ENCODE measurements at regions of chr7 and their contacts with region 1.

Region 1: GRCh38 chr7:22559829-22560489 is 60.0 kb upstream of the STEAP1B start:
- DNase-seq: peak; percentile 45 to 82
- ATAC-seq: peak; percentile 64 to 74 (median 70)
- H3K4me3 ChIP-seq: no peak overlapping the region
- H3K27ac ChIP-seq: peak overlapping the region in 6 of 10 donors; percentile 69 to 93 (median 86)
- H3K4me1 ChIP-seq: peaks cover 8 to 52% (median 49%) of the 10 kb centered on the region in 9 donors
- H3K27me3 ChIP-seq: peaks cover 0 to 12% (median 0%) of the 10 kb centered on the region in 7 donors
- CTCF ChIP-seq: peak; percentile 82 to 96 (median 89)

Region 2: DNA sequence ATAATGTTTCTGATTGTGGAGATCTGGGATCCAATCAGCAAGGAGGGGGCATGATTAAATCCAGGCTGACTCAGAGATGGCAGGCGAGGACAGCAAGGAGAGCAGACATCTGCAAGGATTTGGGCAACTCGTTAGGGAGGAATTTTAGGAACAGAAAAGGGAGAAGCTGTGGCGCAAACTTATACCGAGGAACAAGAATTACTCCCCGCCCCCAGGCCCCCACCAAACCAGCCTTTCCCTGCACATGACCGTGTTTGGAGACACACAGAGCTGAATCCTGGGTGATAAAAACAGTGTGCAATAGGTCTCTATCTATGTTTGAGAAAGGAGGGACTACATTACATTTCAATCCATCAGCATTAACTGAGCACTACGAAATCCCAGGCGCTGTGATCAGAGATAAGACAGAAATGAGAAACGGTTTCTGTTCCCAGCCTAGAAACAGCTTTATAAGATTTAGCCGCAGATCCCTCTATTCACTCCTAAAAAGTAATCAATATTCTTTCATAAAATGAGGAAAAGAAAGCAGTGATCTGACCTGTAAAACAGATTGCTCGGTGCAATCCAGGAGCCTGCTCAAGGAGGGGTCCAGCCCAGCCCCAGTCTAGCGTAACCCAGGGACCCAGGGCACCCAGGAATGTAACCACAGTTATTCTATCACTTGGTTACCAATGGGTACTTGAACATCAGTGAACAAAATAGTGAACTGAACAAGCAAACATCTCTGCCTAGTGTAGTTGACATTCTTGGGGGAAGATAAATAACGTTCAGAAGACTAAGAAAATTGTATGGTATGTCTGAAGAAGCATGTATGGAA is 165.8 kb before region 1 on chr7:
- intact Hi-C with region 1: no loop called
- DNase-seq: no peak
- ATAC-seq: no peak
- H3K4me3 ChIP-seq: no peak overlapping the region
- H3K27ac ChIP-seq: no peak overlapping the region
- H3K4me1 ChIP-seq: peaks cover 0 to 5% (median 0%) of the 10 kb centered on the region in 9 donors
- H3K27me3 ChIP-seq: peaks cover 0 to 7% (median 0%) of the 10 kb centered on the region in 7 donors
- CTCF ChIP-seq: no peak

Region 3: DNA sequence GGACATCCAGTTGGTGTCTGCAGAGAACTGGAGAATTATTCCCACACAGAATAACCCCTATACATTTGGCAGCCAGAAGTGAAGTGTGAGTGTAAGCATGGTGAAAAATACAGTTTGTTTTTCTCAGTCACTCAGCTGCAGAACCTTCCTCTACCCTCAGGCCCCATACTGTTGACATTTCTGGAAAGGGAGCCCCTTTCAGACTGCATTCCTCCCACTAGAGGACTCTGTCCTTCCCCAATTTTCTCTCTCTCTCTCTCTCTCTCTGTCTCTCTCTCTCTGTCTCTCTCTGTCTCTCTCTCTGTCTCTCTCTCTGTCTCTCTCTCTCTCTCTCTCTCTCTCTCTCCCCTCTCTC is 26.8 kb after region 1 on chr7:
- intact Hi-C with region 1: loop called in 3 of 10 experiments (anchors 2 kb)
- DNase-seq: no peak
- ATAC-seq: no peak
- H3K4me3 ChIP-seq: no peak overlapping the region
- H3K27ac ChIP-seq: peak overlapping the region in 4 of 10 donors; percentile 16 to 93 (median 36)
- H3K4me1 ChIP-seq: peaks cover 21 to 82% (median 70%) of the 10 kb centered on the region in 9 donors
- H3K27me3 ChIP-seq: no peaks in the 10 kb centered on the region
- CTCF ChIP-seq: peak in 8 of 9 donors; percentile 13 to 50 (median 38)

Region 4: DNA sequence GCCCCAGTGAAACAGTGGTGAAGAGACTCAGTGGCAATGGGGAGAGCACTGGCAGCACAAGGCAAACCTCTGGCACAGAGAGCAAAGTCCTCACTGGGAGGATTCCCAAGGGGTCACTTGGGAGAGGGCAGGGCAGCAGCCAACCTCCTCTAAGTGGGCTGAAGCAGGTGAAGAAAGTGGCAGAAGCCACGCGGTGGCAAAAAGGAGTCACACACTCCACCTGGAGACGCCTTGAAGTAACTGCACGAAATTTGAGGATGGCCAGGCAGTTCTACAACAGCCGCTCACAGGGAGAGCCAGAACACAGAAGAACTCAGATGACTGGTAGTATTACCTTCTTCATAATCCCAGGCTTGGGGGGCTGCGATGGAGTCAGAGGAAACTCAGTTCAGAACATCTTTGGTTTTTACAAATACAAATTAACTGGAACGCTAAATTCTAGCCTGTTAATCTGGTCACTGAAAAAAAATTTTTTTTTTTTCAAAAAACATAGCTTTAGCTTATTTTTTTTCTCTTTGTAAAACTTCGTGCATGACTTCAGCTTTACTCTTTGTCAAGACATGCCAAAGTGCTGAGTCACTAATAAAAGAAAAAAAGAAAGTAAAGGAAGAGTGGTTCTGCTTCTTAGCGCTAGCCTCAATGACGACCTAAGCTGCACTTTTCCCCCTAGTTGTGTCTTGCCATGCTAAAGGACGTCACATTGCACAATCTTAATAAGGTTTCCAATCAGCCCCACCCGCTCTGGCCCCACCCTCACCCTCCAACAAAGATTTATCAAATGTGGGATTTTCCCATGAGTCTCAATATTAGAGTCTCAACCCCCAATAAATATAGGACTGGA is 166.6 kb after region 1 on chr7:
- intact Hi-C with region 1: loop called (anchors 1 to 5 kb)
- DNase-seq: peak; percentile 23 to 42
- ATAC-seq: peak; percentile 49 to 75 (median 63)
- H3K4me3 ChIP-seq: peak overlapping the region in 9 of 10 donors; percentile 32 to 53 (median 46)
- H3K27ac ChIP-seq: peak overlapping the region; percentile 56 to 86 (median 75)
- H3K4me1 ChIP-seq: peaks cover 4 to 66% (median 44%) of the 10 kb centered on the region in 9 donors
- H3K27me3 ChIP-seq: no peaks in the 10 kb centered on the region
- CTCF ChIP-seq: peak; percentile 27 to 66 (median 55)

Region 5: GRCh38 chr7:22822486-22823141 is 262.7 kb after region 1 on chr7 and contains the start of gene TOMM7:
- intact Hi-C with region 1: loop called in 1 of 10 experiments (anchors 2 kb)
- DNase-seq: peak; percentile 90 to 91
- ATAC-seq: peak; percentile 95 to 98 (median 98)
- H3K4me3 ChIP-seq: peak within 1 kb of the TSS; percentile 51 to 93 (median 80)
- H3K27ac ChIP-seq: peak within 1 kb of the TSS in 9 of 10 donors; percentile 71 to 94 (median 85)
- H3K4me1 ChIP-seq: peaks cover 0 to 39% (median 27%) of the 10 kb centered on the region in 9 donors
- H3K27me3 ChIP-seq: peaks cover 0 to 9% (median 0%) of the 10 kb centered on the region in 7 donors
- CTCF ChIP-seq: peak in 8 of 9 donors; percentile 32 to 70 (median 63)
- total RNA-seq, gene TOMM7: 454 to 532 (median 524) TPM

Region 6: GRCh38 chr7:23013715-23014649 is 454.0 kb after region 1 on chr7 and contains the start of gene HYCC1:
- intact Hi-C with region 1: loop called in 1 of 10 experiments (anchors 10 kb)
- DNase-seq: peak; percentile 98 to 99
- ATAC-seq: peak; percentile 99 to 100 (median 100)
- H3K4me3 ChIP-seq: peak within 1 kb of the TSS; percentile 60 to 96 (median 84)
- H3K27ac ChIP-seq: peak within 1 kb of the TSS; percentile 19 to 93 (median 86)
- H3K4me1 ChIP-seq: peaks cover 0 to 57% (median 38%) of the 10 kb centered on the region in 9 donors
- H3K27me3 ChIP-seq: no peaks in the 10 kb centered on the region
- CTCF ChIP-seq: peak; percentile 38 to 75 (median 67)
- total RNA-seq, gene HYCC1: 26.2 to 39.6 (median 34.5) TPM

Measured in heart right ventricle (tissue), 16 donors.